ENCODE measurements at regions of chr5 and their contacts with region 1.

Region 1: DNA sequence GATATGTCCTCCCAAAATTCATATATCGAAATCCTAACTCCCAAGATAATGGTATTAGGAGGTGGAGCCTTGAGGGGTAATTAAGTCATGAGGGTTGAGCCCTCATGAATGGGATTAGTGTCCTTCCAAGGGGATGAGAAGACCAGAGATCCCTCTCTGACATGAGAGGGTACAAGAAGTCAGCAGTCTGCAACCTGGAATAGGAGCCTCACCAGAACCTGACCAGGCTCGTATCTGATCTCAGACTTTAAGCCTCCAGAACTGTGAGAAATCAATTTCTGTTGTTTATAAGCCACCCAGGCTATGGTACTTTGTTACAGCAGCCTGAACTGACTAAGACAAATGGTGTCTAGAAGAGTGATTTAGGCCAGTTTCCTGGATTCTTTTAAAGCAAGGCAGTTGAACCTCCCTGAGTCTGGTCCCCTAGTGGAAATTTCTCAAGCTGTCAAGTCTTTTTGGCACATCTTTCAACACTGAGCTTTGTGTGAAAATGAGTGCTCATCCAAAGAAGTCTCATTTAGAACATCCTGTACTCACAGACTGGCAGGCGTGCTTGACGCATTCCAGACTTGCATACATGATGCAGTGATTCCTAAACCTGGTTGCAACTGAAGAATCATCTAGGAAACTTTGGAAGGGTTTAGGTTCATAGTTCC is 254.8 kb upstream of the PPP1R2B start:
- DNase-seq: peak; percentile 92
- H3K4me3 ChIP-seq: no peak overlapping the region
- H3K27ac ChIP-seq: peak overlapping the region; percentile 64 to 86 (median 80)
- H3K4me1 ChIP-seq: peaks cover 0 to 16% (median 14%) of the 10 kb centered on the region in 4 donors
- H3K27me3 ChIP-seq: no peaks in the 10 kb centered on the region
- CTCF ChIP-seq: peak in 1 of 4 experiments; percentile 13
- EP300 ChIP-seq: peak; percentile 72 to 96 (median 92)
- POLR2A ChIP-seq: no peak

Region 2: GRCh38 chr5:156326718-156327259 is 268.5 kb before region 1 on chr5 and contains the start of gene SGCD:
- intact Hi-C with region 1: loop called (anchors 10 kb)
- DNase-seq: peak; percentile 86
- H3K4me3 ChIP-seq: peak within 1 kb of the TSS; percentile 34 to 60 (median 54)
- H3K27ac ChIP-seq: peak within 1 kb of the TSS; percentile 79 to 87 (median 83)
- H3K4me1 ChIP-seq: peaks cover 0 to 39% (median 18%) of the 10 kb centered on the region in 4 donors
- H3K27me3 ChIP-seq: no peaks in the 10 kb centered on the region
- CTCF ChIP-seq: no peak
- EP300 ChIP-seq: no peak
- POLR2A ChIP-seq: peak in 1 of 2 donors; percentile 62
- total RNA-seq, gene SGCD: 8.2 to 34.3 (median 19.8) TPM

Region 3: GRCh38 chr5:156394642-156395305 is 200.5 kb before region 1 on chr5:
- intact Hi-C with region 1: loop called (anchors 10 kb)
- DNase-seq: no peak
- H3K4me3 ChIP-seq: no peak overlapping the region
- H3K27ac ChIP-seq: peak overlapping the region; percentile 29 to 73 (median 61)
- H3K4me1 ChIP-seq: peaks cover 0 to 44% (median 27%) of the 10 kb centered on the region in 4 donors
- H3K27me3 ChIP-seq: no peaks in the 10 kb centered on the region
- CTCF ChIP-seq: no peak
- EP300 ChIP-seq: no peak
- POLR2A ChIP-seq: no peak

Region 4: DNA sequence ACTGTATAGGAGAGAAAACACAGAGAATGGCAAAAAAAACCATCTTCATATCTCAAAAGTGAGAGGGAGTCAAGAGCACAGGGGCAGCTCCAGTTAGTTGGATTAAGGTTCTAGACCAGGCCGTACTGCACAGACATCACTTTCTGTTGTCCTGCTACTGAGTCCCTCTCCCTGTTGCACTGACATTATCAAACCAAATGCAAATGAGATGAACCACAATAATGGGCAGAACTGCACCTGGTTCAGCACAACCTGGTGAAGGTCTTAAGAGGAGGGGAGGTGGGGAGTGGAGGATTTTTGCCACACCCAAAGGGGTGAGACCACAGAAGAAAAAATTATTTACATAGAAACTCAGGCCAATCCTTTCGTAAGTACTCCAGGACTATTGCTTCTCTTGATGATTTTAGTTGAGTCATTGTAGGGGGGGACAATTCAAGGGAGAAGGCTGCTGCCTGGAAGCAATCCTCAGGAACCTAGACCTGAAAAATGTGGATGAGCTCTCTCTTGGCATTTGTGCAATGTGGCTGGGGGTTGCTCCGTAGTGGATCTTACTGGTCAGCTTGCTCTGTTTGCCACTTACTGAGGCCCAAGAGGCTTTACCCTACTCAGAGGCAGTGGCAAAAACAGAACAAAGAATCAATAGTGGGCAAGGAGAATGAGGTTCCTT is 160.3 kb after region 1 on chr5:
- intact Hi-C with region 1: no loop called
- DNase-seq: no peak
- H3K4me3 ChIP-seq: no peak overlapping the region
- H3K27ac ChIP-seq: no peak overlapping the region
- H3K4me1 ChIP-seq: no peaks in the 10 kb centered on the region
- H3K27me3 ChIP-seq: no peaks in the 10 kb centered on the region
- CTCF ChIP-seq: no peak
- EP300 ChIP-seq: no peak
- POLR2A ChIP-seq: no peak